Ovary (tissue), 10 donors: ENCODE measurements at regions of chr3 and their contacts with region 1.

Region 1: DNA sequence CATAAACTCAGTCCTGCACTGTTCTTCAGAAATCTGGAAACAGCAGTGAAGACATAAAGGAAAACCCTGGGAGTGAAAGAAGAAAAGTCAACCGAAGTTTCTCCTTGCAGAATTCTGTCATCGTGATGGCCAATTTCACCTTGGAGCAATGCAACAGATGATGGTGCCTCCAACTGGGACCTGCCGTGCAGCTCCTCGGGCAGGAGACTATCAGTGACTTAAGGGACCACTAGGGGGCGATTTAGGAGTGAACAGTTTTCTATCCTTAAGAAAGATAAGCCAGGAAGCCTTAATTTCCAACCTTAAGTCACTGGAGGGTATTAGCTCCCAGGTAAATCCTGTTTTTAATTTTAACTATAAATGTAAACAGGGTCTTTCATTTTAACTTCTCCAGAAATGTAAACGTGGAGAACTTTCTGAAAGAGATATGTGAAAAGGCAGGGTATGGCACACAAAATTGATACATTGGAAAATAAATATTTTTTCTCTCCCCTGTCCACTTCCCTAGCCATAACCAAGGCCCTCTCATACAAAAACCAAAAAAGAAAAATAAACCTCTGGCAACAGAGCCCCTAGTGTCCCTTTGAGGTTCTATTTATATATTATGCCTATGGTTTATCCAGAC is 116.3 kb downstream of the PDZRN3 start:
- DNase-seq: peak in 2 of 5 donors; percentile 44 to 71
- H3K4me3 ChIP-seq: no peak overlapping the region
- H3K27ac ChIP-seq: peak overlapping the region in 1 of 2 donors; percentile 68
- H3K4me1 ChIP-seq: peaks cover 28% of the 10 kb centered on the region
- H3K27me3 ChIP-seq: no peaks in the 10 kb centered on the region
- CTCF ChIP-seq: peak; percentile 20 to 66 (median 46)
- EP300 ChIP-seq: no peak
- POLR2A ChIP-seq: no peak

Region 2: DNA sequence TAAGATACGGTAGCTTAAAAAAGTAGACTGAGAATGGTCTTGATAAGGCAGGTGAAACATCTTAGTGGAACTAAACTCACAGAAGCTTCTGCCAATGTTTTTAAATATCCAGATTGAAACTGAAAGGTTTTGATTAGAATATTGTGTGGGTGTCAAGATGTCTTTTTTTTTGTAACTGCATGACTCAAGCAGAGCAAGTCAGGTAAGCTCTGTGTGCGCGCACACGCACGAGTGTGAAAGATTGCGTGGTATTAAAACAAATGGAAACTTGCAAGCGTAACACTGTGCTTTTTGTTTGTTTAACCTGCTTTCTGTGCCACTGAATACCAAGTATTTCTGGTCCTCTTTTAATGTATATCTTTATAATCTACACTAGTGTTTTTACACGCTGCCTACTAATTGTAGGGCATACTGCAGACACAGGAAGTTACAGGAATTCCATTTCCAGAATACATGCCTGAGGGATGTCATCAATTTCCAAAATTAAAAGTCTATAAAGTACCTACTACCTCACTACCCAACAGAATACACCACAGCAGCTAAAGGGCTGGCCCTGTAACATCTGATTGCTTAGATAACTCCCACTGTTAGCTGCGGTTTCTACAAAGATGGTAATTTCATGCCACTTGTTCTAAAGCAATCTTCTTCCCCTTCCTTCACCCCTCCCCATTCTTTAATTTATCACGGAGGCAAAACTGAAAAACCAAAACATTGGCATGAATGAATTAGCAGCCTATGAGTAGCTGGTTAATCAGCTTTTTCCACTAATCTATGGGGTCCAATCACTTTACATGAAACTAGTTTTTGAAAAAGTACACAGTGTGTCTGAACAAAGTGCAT is 1133.0 kb before region 1 on chr3:
- intact Hi-C with region 1: no loop called
- DNase-seq: no peak
- H3K4me3 ChIP-seq: no peak overlapping the region
- H3K27ac ChIP-seq: no peak overlapping the region
- H3K4me1 ChIP-seq: peaks cover 1% of the 10 kb centered on the region
- H3K27me3 ChIP-seq: no peaks in the 10 kb centered on the region
- CTCF ChIP-seq: no peak
- EP300 ChIP-seq: no peak
- POLR2A ChIP-seq: no peak

Region 3: DNA sequence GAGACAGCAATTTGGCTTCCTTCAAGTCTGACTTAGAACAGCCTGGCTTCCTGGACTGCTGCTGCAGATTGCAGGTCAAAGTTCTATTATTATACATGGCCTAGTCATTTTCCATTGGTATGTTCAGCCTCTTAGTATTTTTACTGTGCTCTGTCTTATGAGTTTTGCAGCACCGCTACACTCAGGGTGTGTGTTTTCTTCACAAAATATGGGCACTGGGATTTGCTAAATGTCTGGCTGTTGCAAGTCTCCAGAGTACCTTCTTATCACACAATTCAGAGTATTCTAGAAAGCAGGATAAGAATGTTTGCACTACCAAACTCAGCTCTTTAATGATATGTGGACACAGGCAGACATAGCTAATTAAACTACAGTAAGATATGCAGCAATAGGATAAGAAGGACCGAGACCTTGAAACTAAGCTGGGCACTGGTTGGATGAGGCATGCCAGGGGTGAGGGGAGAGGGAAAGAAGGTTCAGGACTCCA is 319.3 kb after region 1 on chr3:
- intact Hi-C with region 1: loop called in 1 of 4 experiments (anchors 10 kb)
- DNase-seq: no peak
- H3K4me3 ChIP-seq: no peak overlapping the region
- H3K27ac ChIP-seq: peak overlapping the region in 1 of 2 donors; percentile 52
- H3K4me1 ChIP-seq: peaks cover 7% of the 10 kb centered on the region
- H3K27me3 ChIP-seq: no peaks in the 10 kb centered on the region
- CTCF ChIP-seq: no peak
- EP300 ChIP-seq: no peak
- POLR2A ChIP-seq: no peak

Region 4: GRCh38 chr3:73848173-73848906 is 339.9 kb after region 1 on chr3:
- intact Hi-C with region 1: loop called in 2 of 4 experiments (anchors 5 kb)
- DNase-seq: no peak
- H3K4me3 ChIP-seq: no peak overlapping the region
- H3K27ac ChIP-seq: no peak overlapping the region
- H3K4me1 ChIP-seq: no peaks in the 10 kb centered on the region
- H3K27me3 ChIP-seq: no peaks in the 10 kb centered on the region
- CTCF ChIP-seq: peak; percentile 42 to 75 (median 71)
- EP300 ChIP-seq: no peak
- POLR2A ChIP-seq: no peak

Region 5: DNA sequence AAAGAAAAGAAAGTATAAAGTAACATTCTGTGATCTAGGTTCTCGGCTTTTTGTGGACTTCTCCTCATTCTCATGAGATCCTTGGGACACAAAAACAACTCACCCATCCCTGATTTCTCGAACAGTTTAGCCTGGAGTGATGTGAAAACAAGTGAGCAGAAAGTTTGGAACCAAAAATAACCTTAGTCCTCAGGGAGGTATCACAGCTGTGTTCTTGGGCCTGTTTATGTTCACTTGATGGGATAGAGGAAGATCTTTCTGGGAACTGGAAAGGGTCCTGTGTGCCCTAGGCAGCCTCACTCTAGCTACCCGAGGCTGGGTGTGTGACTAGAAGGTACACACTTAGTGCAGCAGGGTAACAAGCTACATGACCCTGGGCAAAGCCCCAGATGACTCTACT is 425.1 kb after region 1 on chr3:
- intact Hi-C with region 1: no loop called
- DNase-seq: no peak
- H3K4me3 ChIP-seq: no peak overlapping the region
- H3K27ac ChIP-seq: no peak overlapping the region
- H3K4me1 ChIP-seq: no peaks in the 10 kb centered on the region
- H3K27me3 ChIP-seq: no peaks in the 10 kb centered on the region
- CTCF ChIP-seq: no peak
- EP300 ChIP-seq: no peak
- POLR2A ChIP-seq: no peak